CD4-positive, alpha-beta memory T cell (primary cell): ENCODE measurements at regions of chr11 and their contacts with region 1.

Region 1: GRCh38 chr11:48109046-48109666 is 107.5 kb upstream of the OR4B1 start:
- DNase-seq: peak; percentile 33 to 47 (median 40)
- H3K4me3 ChIP-seq: peak overlapping the region in 1 of 2 donors; percentile 54
- H3K4me3 Mint-ChIP-seq: peak overlapping the region; percentile 52 to 90 (median 80)
- H3K27ac ChIP-seq: peak overlapping the region; percentile 64
- H3K27ac Mint-ChIP-seq: peak overlapping the region; percentile 70 to 95 (median 88)
- H3K4me1 ChIP-seq: peaks cover 50% of the 10 kb centered on the region
- H3K4me1 Mint-ChIP-seq: peaks cover 36 to 53% (median 45%) of the 10 kb centered on the region in 4 donors
- H3K27me3 ChIP-seq: no peaks in the 10 kb centered on the region
- H3K27me3 Mint-ChIP-seq: no peaks in the 10 kb centered on the region

Region 2: DNA sequence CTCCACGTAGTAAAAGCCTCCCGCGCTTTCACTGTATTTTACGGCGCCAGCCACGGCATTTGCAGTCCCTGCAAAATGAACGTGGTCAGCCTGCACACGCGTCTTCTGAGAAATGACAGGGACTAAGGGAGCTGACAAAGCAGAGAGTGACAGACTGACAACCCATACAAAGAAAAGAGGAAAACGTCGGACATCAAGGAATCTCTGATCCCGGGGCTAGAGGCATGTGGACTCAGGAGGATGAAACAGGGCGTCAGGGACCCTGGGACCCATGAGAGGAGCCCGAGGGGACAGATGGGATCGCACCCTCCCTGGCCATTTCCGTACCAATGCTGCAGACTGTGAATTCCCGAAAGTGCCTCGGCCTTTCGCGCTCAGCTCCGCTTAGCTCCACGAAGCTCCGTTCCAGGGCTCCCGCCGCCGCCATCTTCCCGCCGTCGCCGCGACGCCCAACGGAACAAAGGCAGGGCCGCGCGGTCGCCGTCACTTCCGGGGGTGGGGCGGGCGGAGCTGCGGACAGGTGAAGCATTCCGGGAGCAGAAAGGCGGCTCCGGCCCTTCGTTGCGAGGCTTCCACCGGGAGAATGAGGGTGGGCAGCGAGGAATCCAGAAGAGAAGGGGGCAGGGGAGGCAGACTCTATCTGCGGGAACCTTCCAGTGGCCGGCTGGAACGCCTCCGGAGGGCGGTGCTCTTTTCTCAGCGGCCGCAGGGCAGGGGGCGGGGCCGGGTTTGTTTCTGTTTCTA is 261.1 kb before region 1 on chr11 and contains the start of gene NUP160:
- CTCF ChIA-PET with region 1: interaction called, 6 read pairs
- POLR2A ChIA-PET with region 1: interaction called, 3 read pairs
- intact Hi-C with region 1: loop called (anchors 1 kb)
- DNase-seq: peak; percentile 85 to 88 (median 86)
- H3K4me3 ChIP-seq: peak within 1 kb of the TSS; percentile 70 to 91
- H3K4me3 Mint-ChIP-seq: peak within 1 kb of the TSS; percentile 95 to 100 (median 99)
- H3K27ac ChIP-seq: peak within 1 kb of the TSS; percentile 97
- H3K27ac Mint-ChIP-seq: peak within 1 kb of the TSS; percentile 93 to 100 (median 99)
- H3K4me1 ChIP-seq: peaks cover 64% of the 10 kb centered on the region
- H3K4me1 Mint-ChIP-seq: peaks cover 31 to 72% (median 51%) of the 10 kb centered on the region in 4 donors
- H3K27me3 ChIP-seq: no peaks in the 10 kb centered on the region
- H3K27me3 Mint-ChIP-seq: no peaks in the 10 kb centered on the region
- total RNA-seq, gene NUP160: 57.6 to 62.2 TPM

Region 3: GRCh38 chr11:47955061-47955755 is 153.9 kb before region 1 on chr11:
- CTCF ChIA-PET with region 1: interaction called, 83 read pairs
- POLR2A ChIA-PET with region 1: interaction called, 3 read pairs
- intact Hi-C with region 1: no loop called
- DNase-seq: no peak
- H3K4me3 ChIP-seq: no peak overlapping the region
- H3K4me3 Mint-ChIP-seq: no peak overlapping the region
- H3K27ac ChIP-seq: no peak overlapping the region
- H3K27ac Mint-ChIP-seq: peak overlapping the region in 1 of 7 donors; percentile 13
- H3K4me1 ChIP-seq: peaks cover 14% of the 10 kb centered on the region
- H3K4me1 Mint-ChIP-seq: peaks cover 12 to 20% (median 16%) of the 10 kb centered on the region in 4 donors
- H3K27me3 ChIP-seq: no peaks in the 10 kb centered on the region
- H3K27me3 Mint-ChIP-seq: no peaks in the 10 kb centered on the region

Region 4: DNA sequence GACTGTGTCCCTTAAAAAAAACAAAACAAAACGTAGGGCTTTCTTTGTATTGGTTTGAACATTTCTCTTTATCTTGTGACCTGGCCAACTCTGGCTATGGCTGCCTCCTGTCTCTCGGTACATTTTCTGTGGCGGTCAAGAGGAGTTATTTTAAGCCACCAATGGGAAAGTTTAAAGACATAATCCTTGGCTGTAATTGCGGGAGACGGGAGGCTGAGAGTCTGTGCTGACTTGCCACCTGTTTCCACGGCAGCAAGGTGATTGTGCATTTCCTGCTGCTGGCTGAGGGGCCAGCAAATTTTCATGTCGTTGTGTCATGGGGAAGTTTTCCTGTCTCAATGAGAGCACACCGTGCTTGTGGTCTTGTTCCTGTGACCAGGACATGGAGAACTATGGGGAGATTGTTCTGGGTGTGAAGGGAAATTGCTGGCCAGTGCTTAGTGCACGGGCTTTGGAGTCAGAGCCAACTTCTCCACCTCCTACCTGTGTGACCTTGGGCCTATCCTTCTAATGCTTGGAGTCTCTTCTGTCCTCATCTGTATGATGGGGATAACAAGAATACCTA is 117.8 kb before region 1 on chr11:
- CTCF ChIA-PET with region 1: interaction called, 13 read pairs
- POLR2A ChIA-PET with region 1: no interaction called
- intact Hi-C with region 1: no loop called
- DNase-seq: peak in 2 of 5 donors; percentile 23 to 39
- H3K4me3 ChIP-seq: peak overlapping the region in 1 of 2 donors; percentile 10
- H3K4me3 Mint-ChIP-seq: peak overlapping the region; percentile 61 to 87 (median 76)
- H3K27ac ChIP-seq: peak overlapping the region; percentile 46
- H3K27ac Mint-ChIP-seq: peak overlapping the region; percentile 49 to 92 (median 84)
- H3K4me1 ChIP-seq: peaks cover 53% of the 10 kb centered on the region
- H3K4me1 Mint-ChIP-seq: peaks cover 34 to 65% (median 43%) of the 10 kb centered on the region in 4 donors
- H3K27me3 ChIP-seq: no peaks in the 10 kb centered on the region
- H3K27me3 Mint-ChIP-seq: no peaks in the 10 kb centered on the region

Region 5: GRCh38 chr11:48020092-48020755 is 88.9 kb before region 1 on chr11:
- CTCF ChIA-PET with region 1: interaction called, 40 read pairs
- POLR2A ChIA-PET with region 1: interaction called, 19 read pairs
- intact Hi-C with region 1: loop called (anchors 1 kb)
- DNase-seq: peak; percentile 58 to 74 (median 59)
- H3K4me3 ChIP-seq: peak overlapping the region in 1 of 2 donors; percentile 17
- H3K4me3 Mint-ChIP-seq: peak overlapping the region; percentile 21 to 85 (median 70)
- H3K27ac ChIP-seq: peak overlapping the region; percentile 59
- H3K27ac Mint-ChIP-seq: peak overlapping the region; percentile 75 to 93 (median 84)
- H3K4me1 ChIP-seq: peaks cover 62% of the 10 kb centered on the region
- H3K4me1 Mint-ChIP-seq: peaks cover 54 to 77% (median 65%) of the 10 kb centered on the region in 4 donors
- H3K27me3 ChIP-seq: no peaks in the 10 kb centered on the region
- H3K27me3 Mint-ChIP-seq: no peaks in the 10 kb centered on the region